K562 (cell line): ENCODE measurements at regions of chr21 and their contacts with region 1.

Region 1: DNA sequence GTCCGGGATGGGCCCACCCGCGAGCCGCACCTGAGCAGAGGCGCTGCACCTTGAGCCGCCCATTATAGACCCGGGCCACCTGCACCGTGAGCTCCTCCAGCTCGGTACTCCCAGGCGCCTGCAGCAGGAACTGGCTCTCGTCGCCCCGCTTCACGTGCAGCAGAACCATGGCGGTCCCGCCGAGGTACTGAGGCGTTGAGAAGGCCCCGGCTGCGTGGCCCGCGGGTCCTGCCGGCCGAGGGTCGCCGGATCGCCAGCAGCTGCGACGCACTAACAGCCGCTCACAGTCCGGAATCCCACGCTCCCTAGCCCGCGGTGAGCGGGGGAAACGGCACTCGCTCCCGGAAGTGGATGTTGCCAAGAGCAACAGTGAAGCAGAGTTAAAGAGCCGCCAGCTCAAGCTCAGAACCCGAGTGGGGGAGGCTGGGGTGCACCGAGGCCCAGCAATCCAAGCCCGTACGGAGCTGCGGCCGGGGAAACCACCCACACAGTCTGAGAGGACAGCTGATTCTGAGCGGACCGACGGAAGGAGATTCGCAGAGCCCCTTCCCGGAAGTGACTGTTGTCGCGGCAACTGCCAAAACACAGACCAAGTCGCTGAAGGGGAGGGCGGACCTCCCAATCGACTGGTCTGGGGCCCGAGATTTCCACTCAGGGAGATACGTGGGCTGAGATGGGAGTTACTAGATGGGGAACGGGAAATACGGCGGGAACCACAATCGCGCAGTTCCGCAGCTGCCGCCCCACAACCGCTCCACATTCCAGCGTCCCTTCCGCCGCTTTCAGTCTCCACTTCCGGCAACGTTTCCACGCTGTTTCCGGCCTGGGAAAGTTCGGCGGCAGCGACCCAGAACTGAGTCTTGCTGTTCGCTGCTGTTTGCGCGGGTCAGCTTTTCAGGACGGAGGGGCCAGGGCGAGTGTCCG is at the start of gene CFAP298:
- DNase-seq: peak; percentile 88 to 96 (median 90)
- ATAC-seq: peak; percentile 90
- H3K4me3 ChIP-seq: peak within 1 kb of the TSS; percentile 89
- H3K27ac ChIP-seq: peak within 1 kb of the TSS; percentile 96
- H3K4me1 ChIP-seq: peaks cover 0 to 21% of the 10 kb centered on the region in 2 experiments; a peak in 4 of 5 replicates
- H3K27me3 ChIP-seq: no peaks in the 10 kb centered on the region
- CTCF ChIP-seq: no peak
- EP300 ChIP-seq: peak; percentile 32
- POLR2A ChIP-seq: peak; percentile 91
- RAD21 ChIP-seq: no peak
- polyA plus RNA-seq, gene CFAP298: 31.4 to 43.5 TPM

Region 2: GRCh38 chr21:32392880-32393676 is 219.3 kb before region 1 on chr21 and contains the start of gene URB1:
- CTCF ChIA-PET with region 1: no interaction called
- POLR2A ChIA-PET with region 1: no interaction called
- in situ Hi-C with region 1: no loop called
- intact Hi-C with region 1: loop called (anchors 5 kb)
- DNase-seq: peak; percentile 94 to 99 (median 98)
- ATAC-seq: peak; percentile 93
- H3K4me3 ChIP-seq: peak within 1 kb of the TSS; percentile 97
- H3K27ac ChIP-seq: peak within 1 kb of the TSS; percentile 84
- H3K4me1 ChIP-seq: peaks cover 10 to 16% of the 10 kb centered on the region in 2 experiments; a peak in 3 of 5 replicates
- H3K27me3 ChIP-seq: no peaks in the 10 kb centered on the region
- CTCF ChIP-seq: peak; percentile 15 to 33 (median 33); a peak in 3 of 6 replicates
- EP300 ChIP-seq: 0 out of 2 replicates have a peak, but pooled peaks have one; percentile 2
- POLR2A ChIP-seq: peak; percentile 97
- RAD21 ChIP-seq: peak; percentile 14 to 35; a peak in 3 of 4 replicates
- polyA plus RNA-seq, gene URB1: 0.97 to 1.4 TPM